H1 (cell line): ENCODE measurements at regions of chr1 and their contacts with region 1.

Region 1: DNA sequence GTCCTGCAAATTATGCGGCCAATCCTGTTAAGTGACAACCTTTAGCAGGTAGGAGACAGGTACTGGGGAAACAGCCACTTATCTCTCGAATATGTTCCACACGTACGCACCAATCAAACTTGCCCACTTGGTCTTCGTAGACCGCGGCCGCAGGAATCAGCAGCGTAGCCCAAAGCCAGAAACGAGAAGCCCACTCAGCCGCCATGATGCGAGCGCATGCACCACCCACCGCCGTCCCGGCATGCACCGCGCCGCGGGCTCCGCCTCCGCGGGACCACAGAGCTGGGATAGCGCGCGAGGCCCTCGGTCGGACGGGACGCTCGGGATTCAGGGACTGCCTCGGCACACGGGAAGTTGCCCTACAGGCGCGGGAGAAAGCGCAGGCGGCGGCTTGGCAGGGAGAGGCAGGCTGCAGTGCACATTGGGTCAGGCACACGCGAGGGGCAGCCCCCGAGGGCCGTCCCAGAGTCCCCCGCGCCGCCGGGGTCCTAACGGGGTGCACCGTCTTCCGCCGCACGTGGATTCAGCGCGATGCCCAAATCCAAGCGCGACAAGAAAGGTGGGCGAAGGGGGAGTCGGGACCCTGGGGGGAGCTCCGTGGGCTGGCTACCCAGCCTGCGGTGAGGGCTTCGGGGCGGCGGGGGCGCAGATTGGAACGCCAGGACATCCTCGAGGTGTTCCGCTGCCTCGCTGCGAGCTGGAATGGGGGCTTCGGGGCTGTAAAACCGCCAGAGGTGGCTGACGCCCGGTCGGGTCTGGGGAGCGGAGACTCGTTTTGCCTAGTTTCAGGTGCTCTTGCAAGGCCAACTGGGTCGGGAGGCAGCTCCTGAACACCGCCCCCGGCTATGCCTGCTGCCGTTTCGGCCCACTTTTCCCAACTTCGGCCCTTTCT is at the starts of genes EMC1 and MRTO4:
- DNase-seq: peak; percentile 27 to 97
- H3K4me3 ChIP-seq: peak within 1 kb of the TSS; percentile 79 to 97 (median 90)
- H3K27ac ChIP-seq: peak within 1 kb of the TSS; percentile 97
- H3K4me1 ChIP-seq: peaks cover 0 to 10% (median 6%) of the 10 kb centered on the region in 4 experiments; a peak in 6 of 7 replicates
- H3K27me3 ChIP-seq: no peaks in the 10 kb centered on the region
- CTCF ChIP-seq: no peak
- EP300 ChIP-seq: no peak
- POLR2A ChIP-seq: peak; percentile 89 to 98
- RAD21 ChIP-seq: no peak
- total RNA-seq, gene EMC1: 45.1 and 51.0 TPM in 2 replicates
- total RNA-seq, gene MRTO4: 54.5 and 64.3 TPM in 2 replicates

Region 2: DNA sequence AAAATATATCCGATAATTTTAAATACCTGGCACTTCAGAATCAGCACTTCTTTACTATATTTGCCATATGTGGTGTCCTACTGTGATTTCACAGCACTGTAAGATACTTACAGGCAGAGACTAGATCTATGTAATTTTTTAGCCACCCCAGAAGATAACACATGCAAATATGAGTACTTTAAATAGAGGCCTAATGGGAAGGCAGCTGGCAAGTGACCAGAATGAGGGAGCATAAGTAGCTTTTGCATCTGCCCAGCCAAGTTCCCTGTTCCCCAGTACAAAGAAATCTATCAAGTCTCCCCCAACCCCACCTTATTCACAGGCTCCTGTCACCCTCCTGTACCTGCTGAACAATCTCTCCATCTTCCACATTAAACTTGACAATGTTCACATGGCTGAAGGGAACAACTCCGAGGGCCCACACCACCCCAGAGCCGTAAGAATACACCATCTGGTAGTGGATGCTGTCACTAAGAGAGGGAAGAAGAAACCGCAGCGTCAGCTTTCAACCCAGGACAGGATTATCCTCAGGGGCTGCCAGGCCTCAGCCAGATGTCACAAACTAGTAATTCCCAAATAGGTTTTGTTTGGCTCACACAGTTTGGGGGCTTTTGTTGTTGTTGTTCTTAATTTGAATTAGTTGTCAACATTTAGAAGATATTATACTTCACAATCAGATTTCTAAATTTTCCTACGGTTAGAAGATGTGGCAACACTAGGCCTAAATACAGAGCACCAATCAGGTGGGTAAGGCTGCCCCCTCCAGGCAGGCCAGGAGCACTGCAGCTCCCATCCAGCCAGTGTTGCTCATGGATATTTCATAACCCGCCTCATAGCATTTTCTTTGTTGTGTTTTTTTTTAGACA is 10.6 kb before region 1 on chr1:
- CTCF ChIA-PET with region 1: interaction called, 6 read pairs
- POLR2A ChIA-PET with region 1: interaction called, 14 read pairs
- DNase-seq: peak in 1 of 2 experiments; percentile 67
- H3K4me3 ChIP-seq: no peak overlapping the region
- H3K27ac ChIP-seq: no peak overlapping the region
- H3K4me1 ChIP-seq: no peaks in the 10 kb centered on the region
- H3K27me3 ChIP-seq: no peaks in the 10 kb centered on the region
- CTCF ChIP-seq: peak; percentile 48 to 84 (median 78); a peak in 3 of 4 replicates
- EP300 ChIP-seq: no peak
- POLR2A ChIP-seq: no peak
- RAD21 ChIP-seq: peak; percentile 35 to 52

Region 3: GRCh38 chr1:19311959-19312781 is 60.6 kb after region 1 on chr1 and contains the starts of genes AKR7A2 and SLC66A1:
- CTCF ChIA-PET with region 1: no interaction called
- POLR2A ChIA-PET with region 1: interaction called, 25 read pairs
- DNase-seq: peak; percentile 60 to 90
- H3K4me3 ChIP-seq: peak within 1 kb of the TSS; percentile 66 to 91 (median 79)
- H3K27ac ChIP-seq: no peak within 1 kb of the TSS
- H3K4me1 ChIP-seq: peaks cover 0 to 16% (median 9%) of the 10 kb centered on the region in 4 experiments; a peak in 6 of 7 replicates
- H3K27me3 ChIP-seq: peaks cover 0 to 4% (median 1%) of the 10 kb centered on the region in 4 experiments; a peak in 1 of 7 replicates
- CTCF ChIP-seq: peak in 1 of 3 experiments; percentile 8; a peak in 1 of 4 replicates
- EP300 ChIP-seq: no peak
- POLR2A ChIP-seq: peak in 1 of 2 experiments; percentile 65; a peak in 2 of 3 replicates
- RAD21 ChIP-seq: no peak
- total RNA-seq, gene AKR7A2: 32.0 and 34.5 TPM in 2 replicates
- total RNA-seq, gene SLC66A1: 14.0 and 16.8 TPM in 2 replicates

Region 4: DNA sequence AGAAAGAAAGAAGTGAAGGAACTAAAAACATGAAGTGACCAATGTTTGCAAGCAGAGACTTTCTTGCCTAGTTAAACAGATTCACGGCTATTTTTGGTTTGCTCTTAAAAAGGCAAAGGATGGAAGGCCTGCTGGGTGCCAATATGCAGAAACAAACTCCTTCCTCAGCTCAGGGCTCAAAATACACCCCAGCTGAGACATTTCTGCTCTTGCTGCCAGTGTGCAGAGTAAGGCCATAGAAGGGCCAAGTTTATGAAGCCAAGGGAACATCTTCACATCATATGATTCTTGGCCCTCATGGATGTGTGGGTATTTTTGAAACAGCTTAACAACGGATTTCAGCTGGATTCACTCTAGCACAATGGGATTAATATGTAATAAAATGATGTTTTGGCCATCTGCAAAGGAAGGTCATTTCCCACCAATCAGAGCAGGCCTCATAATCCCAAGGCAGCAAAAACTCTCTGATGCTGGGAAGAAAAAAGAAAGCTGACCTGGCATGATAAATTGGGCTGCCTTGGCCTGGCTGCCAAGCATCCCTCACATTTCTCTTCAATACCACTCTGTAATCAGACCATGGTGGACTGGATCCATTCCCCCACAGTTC is 163.1 kb after region 1 on chr1:
- CTCF ChIA-PET with region 1: no interaction called
- POLR2A ChIA-PET with region 1: no interaction called
- DNase-seq: no peak
- H3K4me3 ChIP-seq: no peak overlapping the region
- H3K27ac ChIP-seq: no peak overlapping the region
- H3K4me1 ChIP-seq: peaks cover 0 to 5% (median 2%) of the 10 kb centered on the region in 4 experiments; a peak in 1 of 7 replicates
- H3K27me3 ChIP-seq: no peaks in the 10 kb centered on the region
- CTCF ChIP-seq: no peak
- EP300 ChIP-seq: no peak
- POLR2A ChIP-seq: no peak
- RAD21 ChIP-seq: no peak